Heart left ventricle (tissue), 16 donors: ENCODE measurements at regions of chr9 and their contacts with region 1.

Region 1: DNA sequence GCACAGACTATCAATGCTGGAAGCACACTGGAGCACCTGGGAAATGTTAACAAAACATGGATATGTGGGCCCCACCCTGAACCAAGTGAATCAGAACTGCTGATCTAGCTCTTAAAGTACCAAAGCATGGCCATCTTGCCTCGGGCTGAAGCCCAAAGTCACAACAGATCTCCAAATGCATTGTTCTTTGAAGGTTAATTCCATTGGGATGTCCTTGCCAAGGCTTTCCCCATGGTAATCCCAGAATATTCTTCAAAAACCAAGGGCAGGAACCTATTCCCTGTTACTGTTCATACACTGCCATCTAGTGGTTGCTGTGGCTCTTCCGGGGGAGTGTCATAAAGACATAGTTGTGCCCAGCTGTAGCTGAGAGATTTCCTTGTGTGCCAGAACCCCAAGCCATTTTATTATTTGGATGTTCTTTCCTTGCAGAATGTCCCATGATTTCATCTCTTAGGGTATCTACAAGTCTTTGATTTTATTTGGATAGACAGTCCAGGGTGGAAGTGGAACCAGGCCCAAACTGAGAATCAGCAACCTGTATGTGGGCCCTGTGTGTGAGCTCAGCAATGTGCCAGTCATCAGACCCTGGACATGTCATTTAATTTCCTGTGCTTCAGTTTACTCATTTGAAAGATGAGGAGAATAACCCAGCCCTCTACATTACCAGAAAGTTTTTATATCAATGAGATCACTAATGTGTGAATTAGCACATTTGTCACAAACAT is 290.0 kb downstream of the ACTL7B start:
- DNase-seq: peak in 3 of 5 donors; percentile 29 to 60 (median 48)
- ATAC-seq: peak; percentile 93 to 95 (median 94)
- H3K4me3 ChIP-seq: no peak overlapping the region
- H3K27ac ChIP-seq: no peak overlapping the region
- H3K4me1 ChIP-seq: peaks cover 0 to 3% (median 0%) of the 10 kb centered on the region in 12 donors
- H3K27me3 ChIP-seq: no peaks in the 10 kb centered on the region
- CTCF ChIP-seq: peak; percentile 64 to 90 (median 85)
- POLR2A ChIP-seq: no peak

Region 2: DNA sequence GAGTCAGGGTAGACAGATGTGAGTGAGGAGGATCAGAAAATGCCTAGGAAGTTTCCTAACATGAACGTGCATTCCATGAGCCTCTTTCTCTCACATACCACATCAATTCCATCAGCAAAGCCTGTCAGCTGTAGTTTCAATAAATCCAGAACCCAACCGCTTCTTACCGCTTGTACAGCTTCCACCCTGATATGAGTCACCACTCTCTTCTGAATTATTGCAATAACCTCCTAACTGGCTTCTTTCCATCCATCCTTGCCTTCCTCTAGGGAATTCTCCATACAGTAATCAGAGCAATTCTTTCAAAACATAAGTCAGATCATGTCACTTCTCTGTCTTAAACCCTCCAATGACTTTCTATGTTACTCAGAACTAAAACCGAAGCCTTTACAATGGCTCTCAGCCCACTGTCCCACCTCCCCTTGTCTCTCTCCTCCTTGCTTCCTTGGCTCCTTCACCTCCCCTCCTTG is 1290.8 kb before region 1 on chr9:
- intact Hi-C with region 1: no loop called
- DNase-seq: no peak
- ATAC-seq: peak in 3 of 4 donors; percentile 69 to 94 (median 71)
- H3K4me3 ChIP-seq: no peak overlapping the region
- H3K27ac ChIP-seq: peak overlapping the region in 1 of 12 donors; percentile 46
- H3K4me1 ChIP-seq: peaks cover 0 to 18% (median 5%) of the 10 kb centered on the region in 12 donors
- H3K27me3 ChIP-seq: peaks cover 0 to 4% (median 0%) of the 10 kb centered on the region in 9 donors
- CTCF ChIP-seq: no peak
- POLR2A ChIP-seq: no peak

Region 3: DNA sequence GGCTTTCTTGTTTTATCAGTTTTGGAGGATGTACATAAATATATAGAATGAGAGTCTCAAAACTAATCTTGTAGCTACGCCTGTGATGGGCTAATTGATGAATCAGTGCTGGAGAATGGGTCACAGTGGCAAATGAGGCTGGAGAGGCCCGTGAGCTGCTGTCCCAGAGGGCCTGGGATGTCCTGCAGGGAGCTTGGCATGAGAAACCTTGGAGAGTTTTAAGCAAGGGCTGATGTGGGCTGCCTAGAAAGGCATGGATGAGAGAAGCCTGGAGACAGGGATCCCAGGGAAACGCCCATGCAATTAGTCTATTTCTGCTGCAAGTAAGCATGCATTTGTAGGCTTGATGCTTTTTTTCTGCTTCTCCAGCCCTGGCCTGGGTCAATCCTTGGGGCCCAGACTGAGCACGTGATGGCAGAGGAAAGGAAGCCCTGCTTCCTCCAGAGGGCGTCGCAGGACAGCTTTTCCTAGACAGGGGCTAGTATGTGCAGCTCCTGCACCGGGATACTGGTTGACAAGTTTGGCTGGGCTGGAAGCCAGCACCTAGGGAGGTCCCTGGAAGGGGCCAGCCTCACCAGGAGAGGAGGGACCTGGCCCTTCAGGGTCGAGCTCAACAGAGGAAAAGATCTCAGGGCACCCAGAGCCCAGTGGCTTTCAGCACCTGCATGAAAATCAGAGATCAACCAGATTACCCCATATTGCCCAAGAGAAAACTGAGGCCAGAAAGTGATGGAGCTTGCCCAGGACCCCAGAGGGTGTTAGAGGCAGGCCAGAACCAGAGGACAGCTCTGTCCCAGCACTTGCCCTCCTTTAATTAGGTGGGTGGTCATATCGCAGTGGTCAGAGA is 1143.6 kb before region 1 on chr9:
- intact Hi-C with region 1: loop called in 2 of 10 experiments (anchors 5 kb)
- DNase-seq: peak; percentile 54 to 81 (median 64)
- ATAC-seq: peak; percentile 56 to 84 (median 79)
- H3K4me3 ChIP-seq: no peak overlapping the region
- H3K27ac ChIP-seq: no peak overlapping the region
- H3K4me1 ChIP-seq: peaks cover 0 to 24% (median 8%) of the 10 kb centered on the region in 12 donors
- H3K27me3 ChIP-seq: no peaks in the 10 kb centered on the region
- CTCF ChIP-seq: peak; percentile 27 to 69 (median 59)
- POLR2A ChIP-seq: no peak

Region 4: GRCh38 chr9:107465467-107466451 is 1100.1 kb before region 1 on chr9:
- intact Hi-C with region 1: loop called in 9 of 10 experiments (anchors 1 to 5 kb)
- DNase-seq: peak; percentile 65 to 87 (median 72)
- ATAC-seq: peak; percentile 88 to 99 (median 98)
- H3K4me3 ChIP-seq: peak overlapping the region; percentile 38 to 83 (median 70)
- H3K27ac ChIP-seq: peak overlapping the region in 5 of 12 donors; percentile 51 to 69 (median 58)
- H3K4me1 ChIP-seq: peaks cover 0 to 15% (median 4%) of the 10 kb centered on the region in 12 donors
- H3K27me3 ChIP-seq: no peaks in the 10 kb centered on the region
- CTCF ChIP-seq: peak; percentile 84 to 97 (median 90)
- POLR2A ChIP-seq: no peak

Region 5: DNA sequence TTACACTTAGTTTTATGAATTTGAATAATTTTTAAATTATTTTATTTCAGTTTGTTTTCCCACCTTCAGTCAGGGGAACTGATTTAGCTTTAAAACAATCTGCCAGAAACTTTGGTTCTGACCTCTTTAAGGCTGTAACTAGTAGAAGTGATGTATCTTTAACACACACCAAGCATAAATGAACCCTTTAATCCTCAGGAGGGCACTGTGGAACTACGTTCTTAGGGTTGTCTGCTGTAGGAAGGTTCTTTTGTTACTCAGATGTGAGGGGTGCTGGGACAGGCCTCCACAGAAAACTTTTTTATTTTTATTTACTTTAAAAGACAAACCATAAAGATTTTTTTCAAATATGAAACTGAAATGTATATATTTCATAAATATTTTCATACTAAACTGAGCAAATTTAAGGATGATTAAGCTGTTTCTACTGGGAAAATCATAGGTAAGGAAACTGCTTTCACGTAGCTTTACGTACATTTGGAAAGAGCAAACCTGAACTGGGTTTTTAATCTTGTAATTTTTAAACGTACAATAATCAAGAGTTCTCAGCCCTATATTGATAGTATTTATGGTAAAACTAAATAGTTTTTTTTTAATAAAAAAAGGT is 1081.6 kb before region 1 on chr9:
- intact Hi-C with region 1: loop called (anchors 1 to 5 kb)
- DNase-seq: peak in 2 of 5 donors; percentile 41 to 44
- ATAC-seq: peak; percentile 53 to 69 (median 62)
- H3K4me3 ChIP-seq: peak overlapping the region in 11 of 12 donors; percentile 13 to 92 (median 80)
- H3K27ac ChIP-seq: peak overlapping the region in 9 of 12 donors; percentile 6 to 97 (median 94)
- H3K4me1 ChIP-seq: peaks cover 0 to 40% (median 2%) of the 10 kb centered on the region in 12 donors
- H3K27me3 ChIP-seq: peaks cover 0 to 16% (median 0%) of the 10 kb centered on the region in 9 donors
- CTCF ChIP-seq: peak; percentile 23 to 78 (median 61)
- POLR2A ChIP-seq: no peak

Region 6: GRCh38 chr9:108282872-108283271 is 282.9 kb before region 1 on chr9:
- intact Hi-C with region 1: loop called in 3 of 10 experiments (anchors 10 kb)
- DNase-seq: no peak
- ATAC-seq: no peak
- H3K4me3 ChIP-seq: no peak overlapping the region
- H3K27ac ChIP-seq: no peak overlapping the region
- H3K4me1 ChIP-seq: no peaks in the 10 kb centered on the region
- H3K27me3 ChIP-seq: no peaks in the 10 kb centered on the region
- CTCF ChIP-seq: peak in 4 of 12 donors; percentile 9 to 23 (median 14)
- POLR2A ChIP-seq: no peak

Region 7: DNA sequence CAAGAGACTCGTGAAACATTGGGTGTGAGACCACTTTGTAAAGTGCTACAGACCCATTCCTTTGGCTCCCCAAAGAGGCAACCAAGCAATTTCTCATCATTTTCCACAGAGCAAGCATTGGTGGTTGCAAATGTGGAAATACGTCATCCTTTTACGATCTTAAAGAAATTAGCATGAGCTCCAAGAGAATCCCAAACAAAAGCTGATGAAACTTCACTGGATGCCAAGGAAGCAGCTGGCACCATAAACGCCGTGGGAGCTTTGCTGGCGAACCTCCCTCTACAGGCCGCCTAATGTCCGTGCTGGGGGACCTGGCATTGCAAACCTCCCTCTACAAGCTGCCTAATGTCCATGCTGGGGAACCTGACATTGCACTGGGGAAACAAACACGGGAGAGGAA is 142.4 kb before region 1 on chr9:
- intact Hi-C with region 1: no loop called
- DNase-seq: no peak
- ATAC-seq: no peak
- H3K4me3 ChIP-seq: no peak overlapping the region
- H3K27ac ChIP-seq: no peak overlapping the region
- H3K4me1 ChIP-seq: no peaks in the 10 kb centered on the region
- H3K27me3 ChIP-seq: no peaks in the 10 kb centered on the region
- CTCF ChIP-seq: no peak
- POLR2A ChIP-seq: no peak

Region 8: GRCh38 chr9:108468402-108468801 is 97.4 kb before region 1 on chr9:
- intact Hi-C with region 1: loop called in 1 of 10 experiments (anchors 10 kb)
- DNase-seq: no peak
- ATAC-seq: peak in 2 of 4 donors; percentile 27 to 49
- H3K4me3 ChIP-seq: no peak overlapping the region
- H3K27ac ChIP-seq: peak overlapping the region in 1 of 12 donors; percentile 8
- H3K4me1 ChIP-seq: peaks cover 0 to 22% (median 7%) of the 10 kb centered on the region in 12 donors
- H3K27me3 ChIP-seq: no peaks in the 10 kb centered on the region
- CTCF ChIP-seq: peak; percentile 14 to 50 (median 32)
- POLR2A ChIP-seq: no peak

Region 9: GRCh38 chr9:108761655-108762347 is 196.0 kb after region 1 on chr9:
- intact Hi-C with region 1: loop called in 7 of 10 experiments (anchors 5 to 10 kb)
- DNase-seq: peak in 4 of 5 donors; percentile 33 to 60 (median 50)
- ATAC-seq: peak; percentile 37 to 80 (median 78)
- H3K4me3 ChIP-seq: no peak overlapping the region
- H3K27ac ChIP-seq: no peak overlapping the region
- H3K4me1 ChIP-seq: peaks cover 0 to 9% (median 0%) of the 10 kb centered on the region in 12 donors
- H3K27me3 ChIP-seq: no peaks in the 10 kb centered on the region
- CTCF ChIP-seq: peak; percentile 79 to 94 (median 86)
- POLR2A ChIP-seq: no peak